HepG2 (cell line): ENCODE measurements at regions of chr12 and their contacts with region 1.

Region 1: GRCh38 chr12:55817346-55818139 is at the starts of genes ORMDL2 and SARNP:
- DNase-seq: peak; percentile 100
- ATAC-seq: peak; percentile 97
- H3K4me3 ChIP-seq: peak within 1 kb of the TSS; percentile 81 to 93 (median 82)
- H3K27ac ChIP-seq: peak within 1 kb of the TSS; percentile 79
- H3K4me1 ChIP-seq: peaks cover 56% of the 10 kb centered on the region
- H3K27me3 ChIP-seq: no peaks in the 10 kb centered on the region; a peak in 1 of 5 replicates
- CTCF ChIP-seq: no peak
- EP300 ChIP-seq: 0 out of 4 replicates have a peak, but pooled peaks of 1 of the 2 experiments have one; percentile 6
- POLR2A ChIP-seq: peak; percentile 70 to 88
- RAD21 ChIP-seq: no peak
- total RNA-seq, gene ORMDL2: 14.8 and 28.6 TPM in 2 replicates
- total RNA-seq, gene SARNP: 95.4 and 137 TPM in 2 replicates

Region 2: GRCh38 chr12:55728939-55729823 is 88.4 kb before region 1 on chr12 and contains the start of gene CD63:
- CTCF ChIA-PET with region 1: no interaction called
- POLR2A ChIA-PET with region 1: interaction called, 13 read pairs
- in situ Hi-C with region 1: no loop called
- intact Hi-C with region 1: no loop called
- DNase-seq: peak; percentile 73
- ATAC-seq: peak; percentile 81
- H3K4me3 ChIP-seq: peak within 1 kb of the TSS; percentile 84 to 89 (median 84)
- H3K27ac ChIP-seq: peak within 1 kb of the TSS; percentile 79
- H3K4me1 ChIP-seq: peaks cover 38% of the 10 kb centered on the region
- H3K27me3 ChIP-seq: no peaks in the 10 kb centered on the region; a peak in 1 of 5 replicates
- CTCF ChIP-seq: peak; percentile 17; the same call in 1 of the 2 replicates
- EP300 ChIP-seq: 0 out of 4 replicates have a peak, but pooled peaks of 1 of the 2 experiments have one; percentile 12
- POLR2A ChIP-seq: peak; percentile 41 to 69; a peak in 2 of 4 replicates
- RAD21 ChIP-seq: no peak
- total RNA-seq, gene CD63: 134 and 277 TPM in 2 replicates

Region 3: GRCh38 chr12:55926738-55927587 is 109.4 kb after region 1 on chr12:
- CTCF ChIA-PET with region 1: no interaction called
- POLR2A ChIA-PET with region 1: interaction called, 28 read pairs
- in situ Hi-C with region 1: no loop called
- intact Hi-C with region 1: loop called (anchors 1 kb)
- DNase-seq: peak; percentile 90
- ATAC-seq: peak; percentile 73
- H3K4me3 ChIP-seq: peak overlapping the region; percentile 72 to 90 (median 89)
- H3K27ac ChIP-seq: peak overlapping the region; percentile 96
- H3K4me1 ChIP-seq: peaks cover 58% of the 10 kb centered on the region
- H3K27me3 ChIP-seq: no peaks in the 10 kb centered on the region; a peak in 1 of 5 replicates
- CTCF ChIP-seq: peak; percentile 79
- EP300 ChIP-seq: no peak
- POLR2A ChIP-seq: peak; percentile 56 to 62
- RAD21 ChIP-seq: no peak